Thyroid gland (tissue), 4 donors: ENCODE measurements at regions of chr16 and their contacts with region 1.

Region 1: DNA sequence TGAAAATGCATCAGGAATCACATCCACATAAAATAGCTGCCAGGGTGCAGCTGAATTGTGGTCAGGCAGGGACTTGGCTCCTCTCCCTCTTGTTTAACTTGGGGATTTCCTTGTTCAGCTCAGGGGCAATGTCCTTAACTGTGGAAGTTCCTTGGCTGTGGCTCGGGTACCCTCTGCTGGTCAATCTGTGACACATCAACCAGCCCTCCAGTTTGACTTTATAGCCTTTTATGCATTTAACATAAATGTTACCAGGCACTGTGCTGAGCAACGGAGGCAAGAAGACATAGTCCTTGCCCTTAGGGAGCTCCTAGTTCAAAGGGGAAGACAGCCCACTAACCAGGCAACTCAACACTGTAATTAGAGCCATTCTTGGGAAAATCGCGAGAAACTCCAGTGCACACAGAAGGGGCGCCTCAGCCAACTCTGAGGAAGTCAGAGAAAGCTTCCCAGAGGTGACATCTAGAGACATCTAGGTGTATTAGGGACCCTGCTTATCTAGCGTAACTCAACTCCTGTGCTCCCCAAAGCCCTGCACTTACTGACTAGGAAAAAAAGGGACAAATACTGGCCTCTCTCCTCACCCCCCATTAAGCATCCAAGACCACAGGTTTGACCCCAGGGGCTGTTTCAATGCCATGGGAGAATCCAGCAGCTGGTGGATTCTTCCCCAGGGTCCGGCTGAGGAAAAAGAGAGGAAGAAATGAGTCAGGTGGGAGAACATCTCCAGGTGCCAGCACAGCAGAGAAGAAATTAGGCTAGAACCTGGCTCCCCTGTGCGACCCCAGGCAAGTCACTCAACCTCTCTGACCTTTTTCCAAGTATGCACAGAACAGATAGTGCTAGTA is 17.3 kb upstream of the EEF2K start:
- DNase-seq: peak; percentile 67 to 75
- H3K4me3 ChIP-seq: no peak overlapping the region
- H3K27ac ChIP-seq: peak overlapping the region; percentile 64 to 98 (median 91)
- H3K4me1 ChIP-seq: peaks cover 20 to 28% of the 10 kb centered on the region in 2 donors
- H3K27me3 ChIP-seq: no peaks in the 10 kb centered on the region
- CTCF ChIP-seq: peak; percentile 45 to 94 (median 88)
- POLR2A ChIP-seq: no peak

Region 2: GRCh38 chr16:22098405-22099255 is 90.2 kb before region 1 on chr16:
- intact Hi-C with region 1: loop called (anchors 10 kb)
- DNase-seq: no peak
- H3K4me3 ChIP-seq: no peak overlapping the region
- H3K27ac ChIP-seq: no peak overlapping the region
- H3K4me1 ChIP-seq: no peaks in the 10 kb centered on the region
- H3K27me3 ChIP-seq: no peaks in the 10 kb centered on the region
- CTCF ChIP-seq: peak in 5 of 6 experiments; percentile 35 to 67 (median 66)
- POLR2A ChIP-seq: no peak